Vagina (tissue), 2 donors: ENCODE measurements at regions of chr19 and their contacts with region 1.

Region 1: GRCh38 chr19:10936661-10937084 is 8.1 kb downstream of the TIMM29 start:
- DNase-seq: no peak
- H3K4me3 ChIP-seq: no peak overlapping the region
- H3K27ac ChIP-seq: no peak overlapping the region
- H3K4me1 ChIP-seq: peaks cover 8% of the 10 kb centered on the region
- H3K27me3 ChIP-seq: no peaks in the 10 kb centered on the region
- CTCF ChIP-seq: peak; percentile 18 to 64 (median 53)
- POLR2A ChIP-seq: no peak

Region 2: DNA sequence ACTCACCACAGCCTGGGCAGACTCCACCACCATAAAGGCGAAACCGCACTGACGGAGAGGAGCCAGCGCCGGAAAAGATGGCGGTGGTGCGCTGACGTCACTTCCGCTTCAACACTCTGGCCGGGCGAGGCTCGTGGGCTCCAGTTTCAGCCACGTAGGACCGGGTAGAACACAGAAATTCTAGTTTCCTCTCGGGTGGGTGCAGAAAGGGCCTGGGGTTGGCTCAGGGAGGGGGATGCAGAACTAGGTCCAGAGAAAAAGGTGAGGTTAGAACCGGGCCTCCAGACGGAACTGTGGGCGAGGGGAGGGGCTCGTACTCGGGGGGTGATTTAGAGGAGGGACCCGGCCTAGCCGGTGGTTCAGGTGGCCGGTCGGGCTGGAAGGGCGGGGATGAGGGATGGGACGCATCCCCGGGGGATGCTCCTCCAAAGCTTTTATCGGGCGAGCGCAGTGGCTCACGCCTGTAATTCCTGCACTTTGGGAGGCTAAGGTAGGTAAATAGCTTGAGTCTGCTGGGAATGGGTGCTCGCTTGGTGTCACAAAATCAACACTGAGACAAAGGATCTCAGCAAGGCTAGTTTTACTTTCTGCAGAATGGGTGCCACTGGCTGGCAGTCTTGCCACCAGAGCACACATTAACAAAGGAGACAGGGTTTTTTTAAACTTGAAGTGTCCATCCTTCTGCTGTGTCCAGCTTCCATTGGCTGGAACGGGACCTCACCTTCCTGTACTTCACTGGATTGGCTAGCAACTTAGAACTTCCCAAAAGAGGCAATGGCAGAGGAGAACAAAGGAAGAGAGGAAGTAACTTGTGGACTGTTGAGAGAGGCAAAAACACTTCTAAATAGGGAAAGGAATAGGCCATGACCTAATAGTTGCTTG is 1315.3 kb before region 1 on chr19 and contains the start of gene ZNF561:
- intact Hi-C with region 1: no loop called
- DNase-seq: peak in 1 of 2 donors; percentile 88
- H3K4me3 ChIP-seq: peak within 1 kb of the TSS; percentile 87 to 95
- H3K27ac ChIP-seq: peak within 1 kb of the TSS; percentile 95
- H3K4me1 ChIP-seq: peaks cover 30% of the 10 kb centered on the region
- H3K27me3 ChIP-seq: no peaks in the 10 kb centered on the region
- CTCF ChIP-seq: no peak
- POLR2A ChIP-seq: no peak
- total RNA-seq, gene ZNF561: 29.2 TPM

Region 3: GRCh38 chr19:10984166-10984735 is 47.6 kb after region 1 on chr19:
- intact Hi-C with region 1: no loop called
- DNase-seq: no peak
- H3K4me3 ChIP-seq: no peak overlapping the region
- H3K27ac ChIP-seq: no peak overlapping the region
- H3K4me1 ChIP-seq: no peaks in the 10 kb centered on the region
- H3K27me3 ChIP-seq: no peaks in the 10 kb centered on the region
- CTCF ChIP-seq: no peak
- POLR2A ChIP-seq: no peak

Region 4: DNA sequence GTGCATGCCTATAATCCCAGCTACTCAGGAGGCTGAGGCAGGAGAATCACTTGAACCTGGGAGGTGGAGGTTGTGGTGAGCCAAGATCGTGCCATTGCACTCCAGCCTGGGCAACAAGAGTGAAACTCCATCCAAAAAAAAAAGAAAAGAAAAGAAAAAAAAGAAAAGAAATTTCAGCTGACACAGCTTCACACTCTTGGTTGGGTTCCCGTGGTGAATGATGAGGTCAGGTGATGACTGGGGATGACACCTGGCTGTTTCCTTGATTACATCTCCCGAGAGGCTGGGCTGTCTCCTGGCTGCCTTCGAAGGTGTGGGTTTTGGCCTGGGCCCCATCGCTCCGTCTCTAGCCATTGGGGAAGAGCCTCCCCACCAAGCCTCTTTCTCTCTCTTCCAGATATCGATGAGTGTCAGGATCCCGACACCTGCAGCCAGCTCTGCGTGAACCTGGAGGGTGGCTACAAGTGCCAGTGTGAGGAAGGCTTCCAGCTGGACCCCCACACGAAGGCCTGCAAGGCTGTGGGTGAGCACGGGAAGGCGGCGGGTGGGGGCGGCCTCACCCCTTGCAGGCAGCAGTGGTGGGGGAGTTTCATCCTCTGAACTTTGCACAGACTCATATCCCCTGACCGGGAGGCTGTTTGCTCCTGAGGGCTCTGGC is 174.6 kb after region 1 on chr19:
- intact Hi-C with region 1: loop called (anchors 10 kb)
- DNase-seq: no peak
- H3K4me3 ChIP-seq: no peak overlapping the region
- H3K27ac ChIP-seq: no peak overlapping the region
- H3K4me1 ChIP-seq: no peaks in the 10 kb centered on the region
- H3K27me3 ChIP-seq: no peaks in the 10 kb centered on the region
- CTCF ChIP-seq: no peak
- POLR2A ChIP-seq: no peak